Activated CD8-positive, alpha-beta memory T cell treated with anti-CD3 and anti-CD28 coated beads, Interleukin-2, amount 10 ng/mL, durations not matched to agents 7 days and 5 days (primary cell): ENCODE measurements at regions of chr19 and their contacts with region 1.

Region 1: DNA sequence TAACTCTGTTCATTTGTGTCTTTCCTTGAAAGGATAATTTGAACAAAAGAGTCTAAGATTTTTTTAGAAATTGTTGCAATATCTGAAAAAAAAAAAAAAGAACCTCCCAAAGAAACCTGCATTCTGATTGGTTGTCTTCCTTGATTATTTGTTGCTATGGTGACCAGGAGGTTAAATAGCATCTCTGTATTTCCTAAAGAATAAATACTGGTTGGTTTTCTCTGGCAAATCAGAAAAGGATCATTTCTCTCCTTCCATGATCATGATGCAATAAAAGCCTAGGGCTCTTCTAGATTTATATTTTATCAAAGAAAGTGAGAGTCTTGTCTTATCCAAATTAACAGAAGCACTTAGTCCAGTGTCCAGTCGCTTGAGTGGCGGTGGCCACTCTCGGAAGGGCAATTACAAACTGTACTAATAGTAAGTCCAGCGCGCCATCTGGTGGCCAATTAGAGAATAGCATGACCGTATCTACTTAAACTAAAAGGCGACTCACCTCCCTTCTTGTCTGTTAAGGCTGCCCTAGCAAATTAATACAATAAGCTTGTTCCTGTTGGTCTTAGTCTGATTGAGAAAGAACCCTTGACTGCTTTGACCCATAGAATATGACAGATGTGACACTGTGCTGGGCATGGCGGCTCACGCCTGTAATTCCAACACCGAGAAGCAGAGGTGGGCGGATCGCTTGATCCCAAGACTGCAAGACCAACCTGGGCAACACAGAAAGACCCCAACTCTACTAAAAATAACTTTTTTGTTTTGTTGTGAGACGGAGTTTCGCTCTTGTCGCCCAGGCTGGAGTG is 47.0 kb upstream of the PNMA8B start:
- DNase-seq: peak; percentile 87
- ATAC-seq: peak; percentile 45
- H3K4me3 Mint-ChIP-seq: no peak overlapping the region
- H3K27ac Mint-ChIP-seq: no peak overlapping the region
- H3K4me1 Mint-ChIP-seq: no peaks in the 10 kb centered on the region
- H3K27me3 Mint-ChIP-seq: peaks cover 17% of the 10 kb centered on the region

Region 2: GRCh38 chr19:46466536-46467196 is 76.0 kb before region 1 on chr19:
- CTCF ChIA-PET with region 1: no interaction called
- DNase-seq: peak; percentile 42
- ATAC-seq: peak; percentile 49
- H3K4me3 Mint-ChIP-seq: peak overlapping the region; percentile 22
- H3K27ac Mint-ChIP-seq: no peak overlapping the region
- H3K4me1 Mint-ChIP-seq: peaks cover 11% of the 10 kb centered on the region
- H3K27me3 Mint-ChIP-seq: peaks cover 61% of the 10 kb centered on the region

Region 3: GRCh38 chr19:46529622-46530462 is 12.8 kb before region 1 on chr19:
- CTCF ChIA-PET with region 1: interaction called, 154 read pairs
- DNase-seq: peak; percentile 73
- ATAC-seq: peak; percentile 73
- H3K4me3 Mint-ChIP-seq: no peak overlapping the region
- H3K27ac Mint-ChIP-seq: no peak overlapping the region
- H3K4me1 Mint-ChIP-seq: peaks cover 11% of the 10 kb centered on the region
- H3K27me3 Mint-ChIP-seq: peaks cover under 1% of the 10 kb centered on the region

Region 4: DNA sequence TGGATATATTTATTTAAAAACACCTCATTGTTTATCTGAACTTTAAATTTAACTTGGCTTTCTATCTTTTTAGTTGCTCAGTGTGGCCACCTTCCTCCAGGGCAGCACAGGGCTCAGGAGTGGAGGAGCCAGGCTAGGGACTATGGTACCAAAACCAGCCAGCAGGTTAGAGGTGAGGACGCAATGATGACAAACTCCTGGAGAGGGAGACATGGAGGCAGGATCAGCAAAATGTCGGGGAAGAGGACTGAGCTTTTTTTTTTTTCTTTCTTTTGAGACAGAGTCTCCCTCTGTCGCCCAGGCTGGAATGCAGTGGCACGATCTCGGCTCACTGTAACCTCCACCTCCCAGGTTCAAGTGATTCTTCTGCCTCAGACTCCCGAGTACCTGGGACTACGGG is 28.9 kb after region 1 on chr19:
- CTCF ChIA-PET with region 1: no interaction called
- DNase-seq: no peak
- ATAC-seq: no peak
- H3K4me3 Mint-ChIP-seq: no peak overlapping the region
- H3K27ac Mint-ChIP-seq: no peak overlapping the region
- H3K4me1 Mint-ChIP-seq: peaks cover 5% of the 10 kb centered on the region
- H3K27me3 Mint-ChIP-seq: peaks cover 12% of the 10 kb centered on the region